Heart right ventricle (tissue), 16 donors: ENCODE measurements at regions of chr2 and their contacts with region 1.

Region 1: GRCh38 chr2:197304556-197305011 is 6.0 kb downstream of the ANKRD44 start:
- DNase-seq: no peak
- ATAC-seq: no peak
- H3K4me3 ChIP-seq: no peak overlapping the region
- H3K27ac ChIP-seq: peak overlapping the region in 1 of 10 donors; percentile 92
- H3K4me1 ChIP-seq: peaks cover 0 to 74% (median 14%) of the 10 kb centered on the region in 9 donors
- H3K27me3 ChIP-seq: no peaks in the 10 kb centered on the region
- CTCF ChIP-seq: no peak

Region 2: DNA sequence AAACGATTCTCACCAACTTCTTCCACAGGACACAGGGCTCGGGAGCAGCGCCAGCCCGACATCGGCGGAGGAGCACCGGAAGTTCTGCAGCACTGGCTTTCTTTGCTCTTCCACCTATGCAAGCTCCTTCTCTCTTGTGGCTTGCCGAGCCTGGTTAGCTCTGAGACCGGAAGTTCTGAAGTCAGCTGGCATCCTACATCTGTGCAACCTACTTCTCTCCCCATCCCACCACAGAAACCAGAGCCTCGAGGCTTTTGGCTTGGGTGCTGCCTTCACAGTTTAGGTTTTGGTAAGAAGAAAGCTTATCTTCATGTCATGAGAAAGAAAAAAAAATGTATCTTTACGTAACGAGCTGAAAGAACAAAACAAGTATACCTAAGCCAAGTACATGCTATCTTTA is 105.7 kb before region 1 on chr2:
- intact Hi-C with region 1: loop called in 2 of 10 experiments (anchors 5 kb)
- DNase-seq: peak; percentile 21 to 44
- ATAC-seq: peak; percentile 68 to 80 (median 70)
- H3K4me3 ChIP-seq: peak overlapping the region in 6 of 10 donors; percentile 13 to 43 (median 26)
- H3K27ac ChIP-seq: peak overlapping the region in 2 of 10 donors; percentile 13 to 72
- H3K4me1 ChIP-seq: peaks cover 0 to 71% (median 36%) of the 10 kb centered on the region in 9 donors
- H3K27me3 ChIP-seq: no peaks in the 10 kb centered on the region
- CTCF ChIP-seq: no peak